ENCODE measurements at regions of chr7 and their contacts with region 1.

Region 1: GRCh38 chr7:74417419-74417971 is 36.2 kb upstream of the GTF2IRD1 start:
- DNase-seq: peak; percentile 57
- H3K4me3 Mint-ChIP-seq: no peak overlapping the region
- H3K27ac Mint-ChIP-seq: no peak overlapping the region
- H3K4me1 Mint-ChIP-seq: no peaks in the 10 kb centered on the region
- H3K27me3 Mint-ChIP-seq: no peaks in the 10 kb centered on the region

Region 2: DNA sequence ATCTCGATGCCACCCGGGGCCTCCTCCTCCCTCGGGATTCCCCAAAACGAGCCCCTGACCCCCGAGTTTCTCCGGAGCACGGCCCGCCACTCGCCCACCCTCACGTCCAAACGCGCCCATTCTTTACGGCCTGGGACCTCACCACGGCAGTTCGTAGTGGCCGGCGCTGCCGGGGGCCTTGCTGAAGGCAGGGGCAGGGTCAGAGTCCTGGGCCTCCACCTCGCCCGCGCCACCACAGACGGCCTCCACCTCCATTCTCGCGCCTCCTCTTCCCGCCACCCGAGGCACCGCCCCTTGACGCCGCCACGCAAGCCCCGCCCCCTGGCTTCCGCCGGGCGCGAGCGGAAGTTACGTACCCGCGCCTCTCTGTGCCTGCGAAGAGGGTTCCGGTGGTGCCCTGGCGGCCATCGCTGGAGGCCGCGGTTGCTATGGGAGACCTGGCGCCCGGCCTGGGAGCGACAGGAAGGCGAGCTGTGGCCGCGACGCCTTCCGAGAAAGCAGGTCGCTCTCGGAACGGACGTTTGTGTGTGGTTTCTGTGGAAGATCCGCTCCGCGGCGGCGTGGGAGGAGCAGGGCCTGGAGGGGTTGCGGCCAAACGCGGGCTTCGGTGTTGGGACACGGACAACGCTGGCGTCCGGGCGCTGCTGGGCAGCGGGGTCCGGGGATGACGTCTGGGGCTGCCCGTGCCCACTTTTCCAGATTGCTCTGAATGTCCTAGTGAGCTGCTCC is 163.2 kb before region 1 on chr7 and contains the start of gene RFC2:
- CTCF ChIA-PET with region 1: no interaction called
- POLR2A ChIA-PET with region 1: no interaction called
- DNase-seq: peak; percentile 98
- H3K4me3 Mint-ChIP-seq: peak within 1 kb of the TSS; percentile 92
- H3K27ac Mint-ChIP-seq: peak within 1 kb of the TSS; percentile 92
- H3K4me1 Mint-ChIP-seq: peaks cover 46% of the 10 kb centered on the region
- H3K27me3 Mint-ChIP-seq: peaks cover 3% of the 10 kb centered on the region
- total RNA-seq, gene RFC2: 52.5 to 55.9 TPM

Region 3: DNA sequence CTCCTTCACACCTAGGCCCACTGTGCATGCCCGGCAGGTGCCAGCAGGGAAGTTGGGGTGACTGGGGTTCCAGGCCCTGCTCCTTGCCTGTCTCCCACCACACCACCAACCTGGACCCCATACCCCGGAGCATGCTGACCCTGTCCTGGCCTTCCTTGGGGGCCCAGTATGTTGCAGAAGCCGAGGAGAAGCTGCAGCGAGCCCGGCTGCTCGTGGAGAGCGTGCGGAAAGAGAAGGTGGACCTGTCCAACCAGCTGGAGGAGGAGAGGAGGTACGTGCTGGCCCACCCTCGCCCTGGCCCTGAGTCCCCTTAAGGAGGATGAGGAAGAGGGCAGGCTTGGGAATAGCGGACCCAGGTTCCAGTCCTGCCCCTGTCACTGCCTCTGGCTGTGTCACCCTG is 57.5 kb before region 1 on chr7:
- CTCF ChIA-PET with region 1: no interaction called
- POLR2A ChIA-PET with region 1: no interaction called
- DNase-seq: no peak
- H3K4me3 Mint-ChIP-seq: no peak overlapping the region
- H3K27ac Mint-ChIP-seq: no peak overlapping the region
- H3K4me1 Mint-ChIP-seq: peaks cover under 1% of the 10 kb centered on the region
- H3K27me3 Mint-ChIP-seq: no peaks in the 10 kb centered on the region

Region 4: DNA sequence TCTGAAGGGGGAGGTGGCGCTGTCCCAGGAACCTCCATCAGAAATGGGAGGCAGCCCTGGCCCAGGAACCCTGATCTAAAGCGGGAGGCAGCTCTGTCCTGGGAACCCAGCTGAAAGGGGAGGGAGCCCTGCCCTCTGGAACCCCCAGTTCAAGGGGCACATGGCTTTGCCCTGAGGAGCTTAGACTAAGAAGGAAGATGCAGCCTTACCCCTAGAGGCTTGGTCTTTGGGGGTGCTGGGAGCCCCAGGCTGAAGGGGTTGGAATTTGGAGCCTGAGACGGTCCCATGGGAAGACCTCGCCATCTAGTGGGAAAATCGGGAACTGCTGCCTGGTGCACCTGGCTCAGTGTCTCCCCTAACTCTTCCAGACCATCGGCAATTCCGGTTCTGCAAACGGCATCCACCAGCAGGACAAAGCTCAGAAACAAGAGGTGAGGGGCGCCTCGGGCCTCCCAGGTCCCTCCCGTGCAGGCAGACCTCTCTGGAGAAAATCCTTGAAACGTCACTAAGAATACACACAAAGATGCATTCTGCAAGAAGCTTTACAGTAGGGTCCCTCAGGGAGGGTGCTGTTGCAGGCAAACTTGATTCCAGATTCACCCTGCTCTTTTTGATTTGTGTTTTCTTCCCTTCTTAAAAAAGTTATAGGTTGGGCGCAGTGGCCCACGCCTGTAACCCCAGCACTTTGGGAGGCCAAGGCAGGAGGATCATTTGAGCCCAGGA is 16.2 kb before region 1 on chr7:
- CTCF ChIA-PET with region 1: interaction called, 13 read pairs
- POLR2A ChIA-PET with region 1: no interaction called
- DNase-seq: peak; percentile 75
- H3K4me3 Mint-ChIP-seq: no peak overlapping the region
- H3K27ac Mint-ChIP-seq: no peak overlapping the region
- H3K4me1 Mint-ChIP-seq: no peaks in the 10 kb centered on the region
- H3K27me3 Mint-ChIP-seq: no peaks in the 10 kb centered on the region

Region 5: GRCh38 chr7:74561898-74562613 is 144.6 kb after region 1 on chr7:
- CTCF ChIA-PET with region 1: interaction called, 39 read pairs
- POLR2A ChIA-PET with region 1: interaction called, 3 read pairs
- DNase-seq: no peak
- H3K4me3 Mint-ChIP-seq: no peak overlapping the region
- H3K27ac Mint-ChIP-seq: no peak overlapping the region
- H3K4me1 Mint-ChIP-seq: peaks cover 3% of the 10 kb centered on the region
- H3K27me3 Mint-ChIP-seq: no peaks in the 10 kb centered on the region

Measured in activated CD4-positive, alpha-beta memory T cell treated with anti-CD3 and anti-CD28 coated beads, Interleukin-2, amount 10 ng/mL, durations not matched to agents 7 days and 5 days (primary cell).